Activated naive CD4-positive, alpha-beta T cell treated with anti-CD3 and anti-CD28 coated beads for 36 hours (primary cell): ENCODE measurements at regions of chr1 and their contacts with region 1.

Region 1: GRCh38 chr1:207698822-207699483 is 52.9 kb upstream of the CD46 start:
- DNase-seq: peak; percentile 73
- H3K4me3 Mint-ChIP-seq: no peak overlapping the region
- H3K27ac Mint-ChIP-seq: no peak overlapping the region
- H3K4me1 Mint-ChIP-seq: no peaks in the 10 kb centered on the region
- H3K27me3 Mint-ChIP-seq: no peaks in the 10 kb centered on the region

Region 2: GRCh38 chr1:207619871-207620542 is 78.9 kb before region 1 on chr1:
- CTCF ChIA-PET with region 1: interaction called, 4 read pairs
- intact Hi-C with region 1: loop called (anchors 2 kb)
- DNase-seq: peak; percentile 6
- H3K4me3 Mint-ChIP-seq: no peak overlapping the region
- H3K27ac Mint-ChIP-seq: no peak overlapping the region
- H3K4me1 Mint-ChIP-seq: peaks cover 4% of the 10 kb centered on the region
- H3K27me3 Mint-ChIP-seq: no peaks in the 10 kb centered on the region

Region 3: DNA sequence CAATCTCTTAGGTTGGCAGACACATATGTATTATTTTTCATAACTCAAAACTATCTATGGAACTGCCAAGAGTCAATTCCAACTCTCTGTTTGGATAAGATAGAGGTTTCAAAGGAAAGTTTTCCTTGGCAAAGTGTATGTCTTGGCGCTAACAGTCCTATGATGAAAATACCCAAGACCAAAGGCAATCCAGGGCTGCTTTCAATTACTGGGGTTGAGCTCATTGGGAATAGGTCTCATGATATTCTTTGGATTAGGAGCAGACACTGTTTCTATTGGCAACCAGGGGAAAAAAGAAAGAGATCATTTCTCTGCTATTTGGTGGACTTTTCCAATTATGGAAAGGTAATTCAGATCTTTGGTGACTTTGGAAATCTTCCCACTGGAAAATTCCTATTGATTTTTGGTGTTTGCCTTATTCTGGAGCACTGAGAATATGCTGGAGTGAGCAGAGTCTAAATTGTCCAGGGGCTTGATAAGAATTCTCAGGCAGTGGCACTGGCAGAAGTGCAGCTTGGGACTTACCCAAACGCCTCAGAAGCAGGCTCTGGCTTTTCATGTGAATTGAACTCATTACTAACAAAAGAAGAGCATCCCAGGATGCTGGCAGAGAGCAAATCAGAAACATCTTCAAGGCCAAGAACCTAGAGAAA is 565.6 kb after region 1 on chr1:
- CTCF ChIA-PET with region 1: no interaction called
- intact Hi-C with region 1: no loop called
- DNase-seq: no peak
- H3K4me3 Mint-ChIP-seq: no peak overlapping the region
- H3K27ac Mint-ChIP-seq: no peak overlapping the region
- H3K4me1 Mint-ChIP-seq: no peaks in the 10 kb centered on the region
- H3K27me3 Mint-ChIP-seq: peaks cover 30% of the 10 kb centered on the region